Prostate gland (tissue), 2 donors: ENCODE measurements at regions of chr1 and their contacts with region 1.

Region 1: GRCh38 chr1:176559878-176560277 is 96.9 kb downstream of the PAPPA2 start:
- DNase-seq: peak; percentile 38
- H3K4me3 ChIP-seq: no peak overlapping the region
- H3K27ac ChIP-seq: no peak overlapping the region
- H3K4me1 ChIP-seq: no peaks in the 10 kb centered on the region
- H3K27me3 ChIP-seq: peaks cover 5% of the 10 kb centered on the region
- CTCF ChIP-seq: peak; percentile 52 to 80 (median 70)
- POLR2A ChIP-seq: no peak

Region 2: DNA sequence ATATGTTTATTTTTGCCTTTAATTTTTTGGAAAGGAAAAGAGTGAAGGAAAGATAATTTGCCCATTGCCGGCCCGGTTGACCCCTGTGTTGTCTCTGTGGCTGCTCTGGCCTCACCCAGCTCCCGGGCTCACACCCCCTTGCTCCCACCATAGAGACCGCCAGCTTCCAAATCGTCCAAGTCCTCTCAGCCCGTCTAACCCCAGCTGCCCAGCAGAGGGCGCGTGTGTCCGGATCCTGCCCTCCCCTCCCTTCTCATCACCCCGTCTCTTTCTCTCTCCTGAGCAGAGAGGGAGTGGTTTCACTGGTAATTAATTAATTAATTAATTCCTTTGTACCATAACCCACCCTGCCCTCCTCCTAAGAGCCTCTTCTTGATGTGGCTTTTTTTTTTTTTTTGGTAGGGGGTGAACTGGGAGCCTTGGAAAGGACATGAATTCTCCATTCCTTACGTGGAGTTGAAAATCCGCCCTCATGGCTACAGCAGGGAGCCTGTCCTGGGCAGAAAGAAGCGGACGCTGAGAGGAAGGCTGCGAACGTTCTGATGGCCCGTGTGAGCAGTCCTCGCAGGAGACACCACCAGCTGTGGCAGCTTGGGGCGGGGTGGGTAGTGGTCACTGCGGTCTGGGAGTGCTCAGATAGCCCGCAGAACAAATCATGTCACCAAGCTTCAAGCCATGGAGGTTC is 1413.2 kb before region 1 on chr1:
- intact Hi-C with region 1: loop called (anchors 5 kb)
- DNase-seq: peak; percentile 16
- H3K4me3 ChIP-seq: no peak overlapping the region
- H3K27ac ChIP-seq: no peak overlapping the region
- H3K4me1 ChIP-seq: peaks cover 3% of the 10 kb centered on the region
- H3K27me3 ChIP-seq: no peaks in the 10 kb centered on the region
- CTCF ChIP-seq: peak; percentile 43 to 58 (median 52)
- POLR2A ChIP-seq: no peak

Region 3: DNA sequence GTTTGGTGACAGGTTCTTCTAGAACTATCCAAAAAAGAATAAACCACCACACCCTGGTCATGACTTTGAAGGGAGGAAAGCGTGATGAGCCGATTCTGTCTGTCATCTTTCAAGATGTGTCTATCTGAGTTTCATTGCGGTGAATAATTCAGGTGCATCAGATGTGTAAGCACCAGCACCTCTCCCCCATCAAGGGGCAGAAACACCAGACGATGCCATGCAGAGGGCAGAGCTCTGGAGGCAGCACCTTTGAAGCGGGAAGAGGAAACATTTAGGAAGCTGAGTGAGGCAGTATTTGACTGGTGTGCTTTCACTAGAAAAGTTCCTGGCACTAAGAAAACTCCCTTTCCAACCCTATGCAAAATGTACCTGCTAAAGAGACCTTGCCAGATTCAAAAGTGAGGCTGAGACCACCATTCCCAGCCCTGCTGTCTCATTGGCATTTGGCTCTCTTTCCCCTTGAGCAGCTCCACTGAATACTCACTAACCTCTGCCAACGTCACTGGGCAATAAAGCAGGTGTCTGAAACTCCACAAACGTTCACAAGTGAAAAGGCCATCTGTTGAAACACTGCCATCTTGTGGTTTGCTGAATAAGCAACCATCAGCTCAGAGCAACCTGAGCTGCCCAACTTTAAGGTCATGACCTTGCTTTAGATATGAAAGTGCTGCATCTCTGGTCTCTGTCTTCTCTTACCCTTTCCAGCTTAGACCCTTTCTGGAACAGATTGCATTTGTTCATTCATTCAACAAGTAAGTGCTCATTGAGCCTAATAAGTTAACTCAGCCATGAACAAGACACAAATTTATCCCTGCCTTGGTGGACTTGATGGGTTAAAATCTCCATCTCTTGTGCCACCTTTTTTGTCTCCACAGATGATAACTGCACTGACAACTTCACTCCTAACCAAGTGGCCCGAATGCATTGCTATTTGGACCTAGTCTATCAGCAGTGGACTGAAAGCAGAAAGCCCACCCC is 131.7 kb after region 1 on chr1:
- intact Hi-C with region 1: loop called (anchors 2 kb)
- DNase-seq: peak; percentile 42
- H3K4me3 ChIP-seq: no peak overlapping the region
- H3K27ac ChIP-seq: no peak overlapping the region
- H3K4me1 ChIP-seq: peaks cover 6% of the 10 kb centered on the region
- H3K27me3 ChIP-seq: no peaks in the 10 kb centered on the region
- CTCF ChIP-seq: peak; percentile 21 to 65 (median 53)
- POLR2A ChIP-seq: no peak

Region 4: GRCh38 chr1:176843352-176844297 is 283.7 kb after region 1 on chr1:
- intact Hi-C with region 1: loop called (anchors 5 kb)
- DNase-seq: no peak
- H3K4me3 ChIP-seq: no peak overlapping the region
- H3K27ac ChIP-seq: no peak overlapping the region
- H3K4me1 ChIP-seq: no peaks in the 10 kb centered on the region
- H3K27me3 ChIP-seq: no peaks in the 10 kb centered on the region
- CTCF ChIP-seq: peak in 3 of 4 experiments; percentile 56 to 71 (median 62)
- POLR2A ChIP-seq: no peak

Region 5: DNA sequence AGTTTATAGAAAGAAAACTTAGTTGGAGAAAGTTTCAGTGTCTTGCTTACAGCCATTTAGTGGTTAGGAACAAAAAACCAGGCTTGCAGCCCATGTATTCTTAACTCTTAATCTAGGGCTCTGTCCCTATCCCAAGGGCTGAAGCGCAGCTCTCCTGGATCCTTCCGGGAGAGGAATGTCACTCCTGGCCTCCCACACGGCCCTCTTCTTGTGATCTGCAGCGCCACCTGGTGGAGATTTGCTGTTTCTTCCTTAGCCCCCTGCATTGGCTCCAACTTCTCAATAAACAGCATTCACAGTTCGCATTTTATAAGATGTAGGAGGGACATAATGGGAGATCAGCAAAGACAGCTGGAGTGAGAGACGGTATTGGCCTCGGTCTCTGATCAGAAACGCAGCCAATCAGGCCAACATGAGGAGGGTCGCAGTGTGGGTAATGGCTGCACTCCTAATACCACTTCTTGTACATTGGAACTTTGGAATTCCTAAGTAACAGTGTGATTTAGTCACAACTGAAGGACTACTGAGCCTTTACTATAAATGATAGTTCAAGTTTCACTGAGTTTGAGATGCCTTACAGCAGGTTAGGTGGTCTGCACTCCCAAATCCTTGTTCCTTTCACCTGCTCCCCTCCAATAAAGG is 321.2 kb after region 1 on chr1:
- intact Hi-C with region 1: loop called (anchors 5 kb)
- DNase-seq: peak; percentile 55
- H3K4me3 ChIP-seq: no peak overlapping the region
- H3K27ac ChIP-seq: no peak overlapping the region
- H3K4me1 ChIP-seq: no peaks in the 10 kb centered on the region
- H3K27me3 ChIP-seq: no peaks in the 10 kb centered on the region
- CTCF ChIP-seq: peak; percentile 54 to 86 (median 70)
- POLR2A ChIP-seq: no peak